Tibial artery (tissue), 4 donors: ENCODE measurements at regions of chr1 and their contacts with region 1.

Region 1: GRCh38 chr1:202861420-202862200 is 27.3 kb downstream of the RABIF start:
- DNase-seq: peak; percentile 94 to 95
- H3K4me3 ChIP-seq: peak overlapping the region; percentile 56 to 87
- H3K27ac ChIP-seq: peak overlapping the region in 1 of 2 donors; percentile 34
- H3K4me1 ChIP-seq: peaks cover 0 to 11% (median 7%) of the 10 kb centered on the region in 4 donors
- H3K27me3 ChIP-seq: no peaks in the 10 kb centered on the region
- CTCF ChIP-seq: no peak

Region 2: DNA sequence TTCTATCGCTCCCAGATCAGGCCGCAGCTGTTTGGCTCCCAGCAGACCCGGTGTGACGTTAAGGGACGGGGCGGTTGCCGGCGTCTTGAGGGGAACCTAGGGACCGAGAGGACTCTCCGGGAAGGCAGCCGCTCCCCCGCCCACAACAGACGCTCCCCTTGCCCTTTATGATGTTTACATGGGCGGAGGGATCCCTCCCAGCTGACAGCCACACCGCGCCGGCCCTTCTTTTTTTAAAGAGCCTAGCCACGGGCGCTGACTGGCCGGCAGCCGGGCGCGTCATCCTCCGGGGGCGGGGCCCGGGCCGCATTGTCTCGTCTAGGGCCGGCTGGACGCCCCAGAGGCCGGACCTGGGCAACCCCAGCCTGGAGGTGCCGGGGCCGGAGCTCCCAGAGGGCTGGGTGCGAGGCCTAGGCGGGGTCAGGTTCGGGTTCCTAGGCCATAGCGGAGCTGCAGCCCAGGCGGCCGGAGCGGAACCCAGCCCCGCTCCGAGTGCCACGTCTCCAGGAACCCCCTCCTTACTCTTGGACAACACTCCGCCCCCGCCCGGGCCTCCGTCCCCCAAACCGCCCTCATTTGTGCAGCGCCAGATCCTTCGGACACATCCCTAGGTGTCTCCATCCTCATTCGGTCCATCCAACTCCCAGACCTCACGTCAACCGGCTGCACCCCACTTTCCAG is 50.9 kb before region 1 on chr1 and contains the start of gene PCAT6:
- intact Hi-C with region 1: loop called (anchors 10 kb)
- DNase-seq: peak; percentile 94 to 95
- H3K4me3 ChIP-seq: peak within 1 kb of the TSS; percentile 60 to 84
- H3K27ac ChIP-seq: peak within 1 kb of the TSS; percentile 65 to 72
- H3K4me1 ChIP-seq: peaks cover 0 to 25% (median 19%) of the 10 kb centered on the region in 4 donors
- H3K27me3 ChIP-seq: no peaks in the 10 kb centered on the region
- CTCF ChIP-seq: peak in 1 of 2 experiments; percentile 4

Region 3: GRCh38 chr1:202957733-202958543 is 96.3 kb after region 1 on chr1 and contains the start of gene ADIPOR1:
- intact Hi-C with region 1: no loop called
- DNase-seq: peak; percentile 88 to 95
- H3K4me3 ChIP-seq: peak within 1 kb of the TSS; percentile 93 to 99
- H3K27ac ChIP-seq: peak within 1 kb of the TSS; percentile 95 to 97
- H3K4me1 ChIP-seq: peaks cover 0 to 50% (median 31%) of the 10 kb centered on the region in 4 donors
- H3K27me3 ChIP-seq: no peaks in the 10 kb centered on the region
- CTCF ChIP-seq: peak in 1 of 2 experiments; percentile 38